GM12878 (cell line): ENCODE measurements at regions of chr1 and their contacts with region 1.

Region 1: DNA sequence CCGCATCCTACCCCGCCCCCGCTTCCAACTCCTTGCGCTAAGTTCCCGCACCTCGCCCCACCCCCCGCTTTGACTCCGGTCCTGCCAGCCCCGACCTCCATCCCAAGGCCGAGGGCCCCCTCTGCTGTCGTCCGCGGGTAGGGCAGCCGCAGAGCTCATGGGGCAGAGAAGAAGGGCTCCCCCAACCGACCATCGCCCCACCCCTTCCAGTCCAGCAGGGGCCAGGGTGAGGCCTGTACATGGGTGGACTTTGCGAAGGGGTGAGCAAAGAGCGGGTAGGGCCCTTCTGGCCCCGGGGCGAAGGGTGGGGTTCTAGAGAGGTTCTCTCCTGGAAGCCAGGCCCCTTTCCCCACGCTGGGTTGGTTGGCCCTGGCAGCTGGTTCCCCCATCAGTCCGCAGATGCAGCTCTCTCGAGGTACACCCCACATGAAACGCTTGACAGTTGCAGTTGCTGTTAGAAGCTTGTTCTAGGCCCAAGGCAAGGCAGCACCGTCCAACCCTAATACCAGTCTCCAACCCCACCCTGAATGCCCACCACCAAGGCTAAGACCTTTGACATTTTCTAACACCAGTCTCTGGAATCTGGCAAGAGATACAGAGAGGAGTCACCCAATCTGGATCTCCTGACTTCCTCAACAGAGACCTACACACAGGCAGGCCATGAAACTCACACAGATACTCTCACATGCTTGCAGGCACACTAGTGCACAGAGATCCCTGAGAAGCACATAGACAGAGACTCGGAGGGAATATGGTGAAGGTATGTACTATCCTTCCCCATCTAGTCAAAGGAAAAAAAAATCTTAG is 25.3 kb upstream of the ADGRB2 start:
- DNase-seq: peak; percentile 39
- ATAC-seq: peak; percentile 88
- H3K4me3 ChIP-seq: peak overlapping the region; percentile 79; the same call in 1 of the 2 replicates
- H3K27ac ChIP-seq: no peak overlapping the region
- H3K4me1 ChIP-seq: peaks cover 19% of the 10 kb centered on the region
- H3K27me3 ChIP-seq: no peaks in the 10 kb centered on the region; a peak in 1 of 4 replicates
- CTCF ChIP-seq: peak; percentile 86 to 98 (median 98)
- EP300 ChIP-seq: no peak; a peak in 1 of 4 replicates
- POLR2A ChIP-seq: no peak
- RAD21 ChIP-seq: peak; percentile 98

Region 2: DNA sequence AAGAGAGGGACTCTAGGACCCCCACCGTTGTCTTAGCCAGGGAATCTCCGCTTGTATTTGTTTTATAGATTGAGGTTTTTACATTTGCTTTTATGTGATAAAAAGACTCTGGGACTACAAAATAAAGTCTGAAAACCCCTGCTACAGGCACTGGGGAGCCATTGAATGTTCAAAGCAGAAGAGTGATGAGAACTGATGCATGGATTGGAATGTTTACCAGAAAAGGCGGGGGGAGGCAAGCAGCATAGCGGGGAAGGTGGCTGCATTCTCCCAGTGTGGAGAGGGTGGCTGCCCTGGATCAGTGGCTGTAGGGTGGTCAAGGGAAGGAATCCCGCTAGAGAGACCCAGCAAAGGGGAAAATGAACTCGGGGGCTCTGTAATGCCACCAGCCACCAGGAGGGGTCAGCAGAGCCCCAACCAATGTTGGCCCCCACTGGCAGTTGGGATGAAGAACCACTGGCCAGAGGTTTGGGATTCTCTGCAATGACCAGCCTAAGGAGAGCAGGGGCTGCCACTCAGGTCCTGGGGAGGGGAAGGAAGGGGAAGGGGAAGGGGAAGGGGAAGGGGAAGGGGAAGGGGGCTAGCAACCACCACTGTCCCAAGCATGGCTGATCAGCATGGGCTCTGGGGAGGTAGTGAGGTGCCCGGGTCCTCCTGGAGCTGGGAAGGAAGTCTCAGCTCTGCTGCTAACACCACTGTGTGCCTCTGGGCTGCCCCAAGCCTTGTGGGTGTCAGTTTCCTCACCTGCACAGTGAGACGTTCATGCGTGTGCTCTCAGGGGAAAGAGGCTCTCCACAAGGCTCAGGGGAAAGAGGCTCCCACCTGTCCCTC is 125.6 kb before region 1 on chr1:
- CTCF ChIA-PET with region 1: interaction called, 90 read pairs
- POLR2A ChIA-PET with region 1: no interaction called
- RAD21 ChIA-PET with region 1: interaction called, 62 read pairs
- SMC1A ChIA-PET with region 1: interaction called, 38 read pairs
- in situ Hi-C with region 1: no loop called
- intact Hi-C with region 1: loop called (anchors 1 kb)
- DNase-seq: no peak
- ATAC-seq: peak; percentile 60
- H3K4me3 ChIP-seq: no peak overlapping the region
- H3K27ac ChIP-seq: no peak overlapping the region
- H3K4me1 ChIP-seq: no peaks in the 10 kb centered on the region
- H3K27me3 ChIP-seq: no peaks in the 10 kb centered on the region; a peak in 1 of 4 replicates
- CTCF ChIP-seq: peak; percentile 92 to 95 (median 95)
- EP300 ChIP-seq: no peak
- POLR2A ChIP-seq: no peak
- RAD21 ChIP-seq: peak; percentile 93

Region 3: DNA sequence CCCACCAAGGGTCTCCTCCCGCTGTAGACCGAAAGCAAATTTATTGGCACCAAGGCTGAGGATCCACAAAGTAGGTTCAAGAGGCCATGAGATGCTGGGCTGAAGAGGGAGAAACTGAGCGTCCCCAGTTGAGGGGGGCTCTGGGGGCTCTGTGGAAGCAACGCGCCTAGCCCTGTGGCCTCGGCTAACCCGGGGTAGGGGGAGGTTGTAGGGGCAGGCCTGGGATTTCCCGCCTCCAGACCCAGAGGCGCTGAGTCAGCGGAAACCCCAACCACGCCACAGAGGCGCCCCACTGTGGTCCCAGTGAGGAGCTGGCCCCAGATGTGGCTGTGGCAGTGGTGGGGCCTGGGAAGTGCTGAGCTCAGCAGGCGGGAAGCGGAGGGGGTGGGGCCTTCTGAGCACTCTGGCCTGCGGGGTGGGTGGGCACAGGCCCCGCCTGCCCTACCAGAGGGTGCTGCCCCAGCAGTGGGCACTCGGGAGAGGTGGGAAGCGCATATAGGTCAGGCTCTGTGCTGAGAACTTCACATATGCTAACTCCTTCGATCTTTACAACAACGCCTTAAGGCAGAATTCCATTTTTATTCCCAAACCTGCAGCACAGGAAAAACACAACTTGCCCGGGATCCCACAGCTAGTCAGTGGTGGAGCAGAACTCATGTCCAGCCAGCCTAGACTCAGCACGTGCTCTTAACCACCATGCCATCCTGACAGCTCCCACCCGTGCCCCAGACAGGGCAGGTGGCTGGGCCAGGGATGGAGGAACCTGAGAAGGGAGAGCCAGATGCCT is 84.2 kb before region 1 on chr1:
- CTCF ChIA-PET with region 1: interaction called, 20 read pairs
- POLR2A ChIA-PET with region 1: interaction called, 5 read pairs
- RAD21 ChIA-PET with region 1: interaction called, 17 read pairs
- SMC1A ChIA-PET with region 1: interaction called, 11 read pairs
- in situ Hi-C with region 1: no loop called
- intact Hi-C with region 1: no loop called
- DNase-seq: no peak
- ATAC-seq: peak; percentile 81
- H3K4me3 ChIP-seq: peak overlapping the region; percentile 2; the same call in 1 of the 2 replicates
- H3K27ac ChIP-seq: peak overlapping the region; percentile 62
- H3K4me1 ChIP-seq: peaks cover 45% of the 10 kb centered on the region
- H3K27me3 ChIP-seq: no peaks in the 10 kb centered on the region
- CTCF ChIP-seq: peak; percentile 32 to 78 (median 59); a peak in 5 of 6 replicates
- EP300 ChIP-seq: no peak
- POLR2A ChIP-seq: no peak
- RAD21 ChIP-seq: peak; percentile 79

Region 4: GRCh38 chr1:31745096-31745945 is 44.1 kb before region 1 on chr1:
- CTCF ChIA-PET with region 1: interaction called, 19 read pairs
- POLR2A ChIA-PET with region 1: no interaction called
- RAD21 ChIA-PET with region 1: interaction called, 13 read pairs
- SMC1A ChIA-PET with region 1: interaction called, 9 read pairs
- in situ Hi-C with region 1: no loop called
- intact Hi-C with region 1: no loop called
- DNase-seq: no peak
- ATAC-seq: peak; percentile 92
- H3K4me3 ChIP-seq: no peak overlapping the region
- H3K27ac ChIP-seq: no peak overlapping the region
- H3K4me1 ChIP-seq: peaks cover 17% of the 10 kb centered on the region
- H3K27me3 ChIP-seq: no peaks in the 10 kb centered on the region; a peak in 1 of 4 replicates
- CTCF ChIP-seq: peak; percentile 69 to 87 (median 81)
- EP300 ChIP-seq: no peak
- POLR2A ChIP-seq: no peak
- RAD21 ChIP-seq: peak; percentile 71

Region 5: GRCh38 chr1:31762726-31763670 is 26.5 kb before region 1 on chr1:
- CTCF ChIA-PET with region 1: interaction called, 12 read pairs
- POLR2A ChIA-PET with region 1: no interaction called
- RAD21 ChIA-PET with region 1: interaction called, 10 read pairs
- SMC1A ChIA-PET with region 1: interaction called, 4 read pairs
- in situ Hi-C with region 1: no loop called
- intact Hi-C with region 1: no loop called
- DNase-seq: no peak
- ATAC-seq: peak; percentile 62
- H3K4me3 ChIP-seq: peak overlapping the region; percentile 32; the same call in 1 of the 2 replicates
- H3K27ac ChIP-seq: no peak overlapping the region
- H3K4me1 ChIP-seq: peaks cover 8% of the 10 kb centered on the region
- H3K27me3 ChIP-seq: peaks cover 20 to 26% of the 10 kb centered on the region in 2 experiments
- CTCF ChIP-seq: peak in 2 of 3 experiments; percentile 59 to 65; a peak in 4 of 6 replicates
- EP300 ChIP-seq: no peak
- POLR2A ChIP-seq: no peak
- RAD21 ChIP-seq: 0 out of 2 replicates have a peak, but pooled peaks have one; percentile 22

Region 6: DNA sequence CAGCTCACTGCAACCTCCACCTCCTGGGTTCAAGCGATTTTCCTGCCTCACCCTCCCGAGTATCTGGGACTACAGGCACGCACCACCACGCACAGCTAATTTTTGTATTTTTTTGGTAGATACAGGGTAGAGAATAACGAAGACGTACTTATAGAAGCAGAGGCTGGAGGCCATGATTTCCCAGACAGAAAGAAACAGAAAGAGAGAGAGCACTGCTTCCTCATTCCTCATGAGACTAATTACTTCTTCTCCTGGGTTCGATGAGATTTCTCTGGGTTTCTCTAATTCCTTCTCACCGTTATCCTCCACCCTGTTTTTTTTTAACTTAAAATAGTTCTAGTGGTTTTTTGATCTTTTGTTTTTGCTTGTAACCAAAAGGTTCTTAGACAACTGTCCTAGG is 172.1 kb after region 1 on chr1:
- CTCF ChIA-PET with region 1: interaction called, 40 read pairs
- POLR2A ChIA-PET with region 1: interaction called, 3 read pairs
- RAD21 ChIA-PET with region 1: interaction called, 35 read pairs
- SMC1A ChIA-PET with region 1: interaction called, 17 read pairs
- in situ Hi-C with region 1: no loop called
- intact Hi-C with region 1: no loop called
- DNase-seq: no peak
- ATAC-seq: peak; percentile 51
- H3K4me3 ChIP-seq: peak overlapping the region; percentile 42; the same call in 1 of the 2 replicates
- H3K27ac ChIP-seq: peak overlapping the region; percentile 96
- H3K4me1 ChIP-seq: peaks cover 70% of the 10 kb centered on the region
- H3K27me3 ChIP-seq: no peaks in the 10 kb centered on the region
- CTCF ChIP-seq: no peak
- EP300 ChIP-seq: no peak
- POLR2A ChIP-seq: no peak
- RAD21 ChIP-seq: no peak

Region 7: DNA sequence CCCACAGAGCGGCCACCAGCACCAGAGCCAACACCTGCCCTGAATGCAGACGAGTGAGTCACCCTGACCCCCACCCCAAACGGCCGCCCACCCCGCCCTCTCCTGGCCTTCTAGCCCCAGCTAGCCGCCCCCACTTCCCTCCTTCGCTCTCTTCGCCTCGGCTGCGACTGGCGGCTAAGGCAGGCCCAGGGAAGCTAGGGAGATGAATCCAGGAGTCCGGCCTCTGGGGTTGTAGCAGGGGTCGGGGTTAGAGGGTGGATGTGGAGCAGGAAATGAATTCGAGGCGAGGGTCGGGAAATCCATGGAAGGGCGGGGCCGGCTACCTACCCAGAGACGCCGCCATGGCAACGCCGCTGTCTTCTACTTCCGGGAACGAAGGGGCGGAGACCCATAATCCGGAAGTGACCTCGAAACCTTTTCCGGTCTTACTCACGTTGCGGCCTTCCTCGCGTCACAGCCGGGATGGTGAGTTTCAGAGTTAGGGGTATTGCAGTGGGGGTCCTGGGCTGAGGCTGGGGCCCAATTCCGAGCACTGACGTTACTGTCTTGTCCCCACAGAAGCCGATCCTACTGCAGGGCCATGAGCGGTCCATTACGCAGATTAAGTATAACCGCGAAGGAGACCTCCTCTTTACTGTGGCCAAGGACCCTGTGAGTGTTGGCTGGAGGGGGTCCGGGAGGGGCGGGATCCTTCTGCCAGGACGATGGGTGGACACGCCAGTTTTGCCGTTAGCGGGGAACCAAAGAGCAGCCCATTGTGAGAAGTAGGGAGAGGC is 432.7 kb after region 1 on chr1 and contains the starts of genes EIF3I and TMEM234:
- CTCF ChIA-PET with region 1: no interaction called
- POLR2A ChIA-PET with region 1: no interaction called
- RAD21 ChIA-PET with region 1: no interaction called
- SMC1A ChIA-PET with region 1: no interaction called
- in situ Hi-C with region 1: no loop called
- intact Hi-C with region 1: no loop called
- DNase-seq: peak; percentile 60
- ATAC-seq: peak; percentile 91
- H3K4me3 ChIP-seq: peak within 1 kb of the TSS; percentile 89
- H3K27ac ChIP-seq: peak within 1 kb of the TSS; percentile 98
- H3K4me1 ChIP-seq: peaks cover 12% of the 10 kb centered on the region
- H3K27me3 ChIP-seq: no peaks in the 10 kb centered on the region
- CTCF ChIP-seq: no peak
- EP300 ChIP-seq: no peak
- POLR2A ChIP-seq: peak; percentile 90
- RAD21 ChIP-seq: no peak
- polyA plus RNA-seq, gene EIF3I: 572 to 606 TPM
- polyA plus RNA-seq, gene TMEM234: 2.9 to 4.5 TPM